ENCODE measurements at regions of chr1 and their contacts with region 1.

Region 1: GRCh38 chr1:156456622-156457465 is 43.7 kb downstream of the MEF2D start:
- DNase-seq: peak; percentile 99
- H3K4me3 Mint-ChIP-seq: peak overlapping the region; percentile 86
- H3K27ac Mint-ChIP-seq: peak overlapping the region; percentile 99
- H3K4me1 Mint-ChIP-seq: peaks cover 29% of the 10 kb centered on the region
- H3K27me3 Mint-ChIP-seq: no peaks in the 10 kb centered on the region

Region 2: DNA sequence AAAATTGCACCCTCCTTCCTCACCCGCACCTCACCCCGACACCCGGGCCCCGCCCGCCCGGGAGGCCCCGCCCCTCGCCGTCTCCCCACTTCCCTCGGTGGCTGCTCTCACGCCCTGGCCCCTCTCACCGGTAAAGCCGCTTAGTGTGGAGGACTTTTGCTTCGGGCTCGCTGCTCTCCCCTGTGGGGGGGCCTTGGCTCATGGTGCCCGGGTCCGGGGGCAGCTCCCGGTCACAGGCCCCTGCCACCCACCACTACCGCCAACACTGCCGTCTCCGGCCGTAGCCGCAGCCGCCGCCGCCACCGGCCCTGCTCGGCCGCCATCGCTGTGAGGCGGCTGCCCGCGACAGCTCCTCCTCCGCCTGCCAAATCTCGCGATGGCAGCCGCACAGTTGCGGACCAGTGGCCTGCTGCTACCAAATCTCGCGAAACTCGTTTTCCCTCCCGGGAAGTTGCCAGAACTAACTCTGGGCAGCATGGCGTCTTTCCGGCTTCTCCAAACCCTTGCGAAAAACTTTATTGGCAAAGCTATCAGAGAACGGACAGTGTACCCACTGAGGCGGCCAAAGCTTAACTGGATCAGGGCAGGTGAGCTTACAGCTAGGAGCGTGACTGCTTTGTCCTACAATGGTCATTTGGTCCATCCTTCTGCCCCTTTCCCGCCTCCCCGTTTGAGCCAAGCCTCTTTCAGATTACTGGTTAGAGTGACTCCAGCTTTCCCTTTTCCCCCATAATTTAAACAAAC is 174.2 kb before region 1 on chr1 and contains the start of gene SMG5:
- CTCF ChIA-PET with region 1: no interaction called
- POLR2A ChIA-PET with region 1: interaction called, 6 read pairs
- intact Hi-C with region 1: loop called (anchors 2 kb)
- DNase-seq: peak; percentile 98
- H3K4me3 Mint-ChIP-seq: peak within 1 kb of the TSS; percentile 95
- H3K27ac Mint-ChIP-seq: peak within 1 kb of the TSS; percentile 95
- H3K4me1 Mint-ChIP-seq: peaks cover 38% of the 10 kb centered on the region
- H3K27me3 Mint-ChIP-seq: no peaks in the 10 kb centered on the region
- total RNA-seq, gene SMG5: 65.1 to 68.0 TPM

Region 3: GRCh38 chr1:156435545-156436141 is 21.2 kb before region 1 on chr1:
- CTCF ChIA-PET with region 1: no interaction called
- POLR2A ChIA-PET with region 1: no interaction called
- intact Hi-C with region 1: no loop called
- DNase-seq: peak; percentile 32
- H3K4me3 Mint-ChIP-seq: peak overlapping the region; percentile 46
- H3K27ac Mint-ChIP-seq: no peak overlapping the region
- H3K4me1 Mint-ChIP-seq: peaks cover 38% of the 10 kb centered on the region
- H3K27me3 Mint-ChIP-seq: peaks cover 79% of the 10 kb centered on the region

Region 4: DNA sequence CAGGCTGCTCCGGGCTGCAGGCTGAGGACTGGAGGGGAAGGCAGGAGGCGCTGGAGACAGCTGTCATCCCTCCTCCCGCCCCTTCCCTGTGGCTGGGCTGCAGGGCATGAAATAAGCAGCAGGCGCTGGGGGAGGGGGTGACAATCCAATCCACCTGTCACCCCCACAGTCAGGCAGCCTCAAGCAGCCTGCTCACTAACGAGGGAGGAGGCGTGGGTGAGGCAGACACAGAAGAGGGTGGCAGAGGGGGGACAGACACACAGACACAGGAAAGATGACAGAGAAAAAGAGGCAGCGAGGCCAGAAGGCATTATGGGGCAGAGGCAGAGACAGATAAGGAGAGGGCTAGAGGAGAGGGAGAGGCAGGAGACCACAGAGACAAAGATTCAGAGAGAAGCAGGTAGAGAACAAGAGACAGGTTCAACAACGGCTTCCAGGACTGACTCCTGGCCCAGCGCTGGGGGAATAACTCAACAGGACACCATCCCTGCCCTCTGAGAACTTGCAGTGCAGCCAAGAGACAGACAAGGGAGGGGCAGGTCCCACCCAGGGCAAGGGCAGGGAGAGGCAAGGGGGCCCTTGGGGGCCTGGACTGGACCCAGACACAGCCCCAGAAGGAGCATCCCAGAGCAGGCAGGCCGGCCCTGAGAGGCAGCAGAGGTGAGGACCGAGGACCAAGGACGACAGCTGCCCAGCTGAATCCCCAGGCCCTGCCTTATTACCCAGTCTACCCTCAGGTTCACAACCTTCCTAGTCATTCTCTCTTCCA is 32.5 kb after region 1 on chr1:
- CTCF ChIA-PET with region 1: interaction called, 3 read pairs
- POLR2A ChIA-PET with region 1: no interaction called
- intact Hi-C with region 1: loop called (anchors 1 kb)
- DNase-seq: peak; percentile 72
- H3K4me3 Mint-ChIP-seq: peak overlapping the region; percentile 56
- H3K27ac Mint-ChIP-seq: peak overlapping the region; percentile 88
- H3K4me1 Mint-ChIP-seq: peaks cover 88% of the 10 kb centered on the region
- H3K27me3 Mint-ChIP-seq: no peaks in the 10 kb centered on the region

Region 5: GRCh38 chr1:156601122-156601830 is 144.4 kb after region 1 on chr1 and contains the start of gene GPATCH4:
- CTCF ChIA-PET with region 1: interaction called, 4 read pairs
- POLR2A ChIA-PET with region 1: interaction called, 4 read pairs
- intact Hi-C with region 1: loop called (anchors 2 kb)
- DNase-seq: peak; percentile 88
- H3K4me3 Mint-ChIP-seq: peak within 1 kb of the TSS; percentile 94
- H3K27ac Mint-ChIP-seq: peak within 1 kb of the TSS; percentile 95
- H3K4me1 Mint-ChIP-seq: peaks cover 38% of the 10 kb centered on the region
- H3K27me3 Mint-ChIP-seq: no peaks in the 10 kb centered on the region
- total RNA-seq, gene GPATCH4: 40.2 to 43.2 TPM

Region 6: GRCh38 chr1:156740679-156741612 is 284.1 kb after region 1 on chr1 and contains the start of gene MRPL24:
- CTCF ChIA-PET with region 1: no interaction called
- POLR2A ChIA-PET with region 1: interaction called, 3 read pairs
- intact Hi-C with region 1: loop called (anchors 1 kb)
- DNase-seq: peak; percentile 98
- H3K4me3 Mint-ChIP-seq: peak within 1 kb of the TSS; percentile 89
- H3K27ac Mint-ChIP-seq: peak within 1 kb of the TSS; percentile 95
- H3K4me1 Mint-ChIP-seq: peaks cover 47% of the 10 kb centered on the region
- H3K27me3 Mint-ChIP-seq: no peaks in the 10 kb centered on the region
- total RNA-seq, gene MRPL24: 105 to 106 TPM